HEK293 (cell line): ENCODE measurements at regions of chr10 and their contacts with region 1.

Region 1: GRCh38 chr10:52488606-52489485 is 174.8 kb downstream of the DKK1 start:
- H3K4me3 ChIP-seq: no peak overlapping the region
- H3K27ac ChIP-seq: no peak overlapping the region
- H3K4me1 ChIP-seq: no peaks in the 10 kb centered on the region
- CTCF ChIP-seq: no peak

Region 2: GRCh38 chr10:52308251-52309031 is 180.4 kb before region 1 on chr10:
- CTCF ChIA-PET with region 1: interaction called, 109 read pairs
- POLR2A ChIA-PET with region 1: no interaction called
- H3K4me3 ChIP-seq: peak overlapping the region; percentile 22; the same call in 1 of the 2 replicates
- H3K27ac ChIP-seq: no peak overlapping the region
- H3K4me1 ChIP-seq: no peaks in the 10 kb centered on the region
- CTCF ChIP-seq: peak; percentile 44

Region 3: DNA sequence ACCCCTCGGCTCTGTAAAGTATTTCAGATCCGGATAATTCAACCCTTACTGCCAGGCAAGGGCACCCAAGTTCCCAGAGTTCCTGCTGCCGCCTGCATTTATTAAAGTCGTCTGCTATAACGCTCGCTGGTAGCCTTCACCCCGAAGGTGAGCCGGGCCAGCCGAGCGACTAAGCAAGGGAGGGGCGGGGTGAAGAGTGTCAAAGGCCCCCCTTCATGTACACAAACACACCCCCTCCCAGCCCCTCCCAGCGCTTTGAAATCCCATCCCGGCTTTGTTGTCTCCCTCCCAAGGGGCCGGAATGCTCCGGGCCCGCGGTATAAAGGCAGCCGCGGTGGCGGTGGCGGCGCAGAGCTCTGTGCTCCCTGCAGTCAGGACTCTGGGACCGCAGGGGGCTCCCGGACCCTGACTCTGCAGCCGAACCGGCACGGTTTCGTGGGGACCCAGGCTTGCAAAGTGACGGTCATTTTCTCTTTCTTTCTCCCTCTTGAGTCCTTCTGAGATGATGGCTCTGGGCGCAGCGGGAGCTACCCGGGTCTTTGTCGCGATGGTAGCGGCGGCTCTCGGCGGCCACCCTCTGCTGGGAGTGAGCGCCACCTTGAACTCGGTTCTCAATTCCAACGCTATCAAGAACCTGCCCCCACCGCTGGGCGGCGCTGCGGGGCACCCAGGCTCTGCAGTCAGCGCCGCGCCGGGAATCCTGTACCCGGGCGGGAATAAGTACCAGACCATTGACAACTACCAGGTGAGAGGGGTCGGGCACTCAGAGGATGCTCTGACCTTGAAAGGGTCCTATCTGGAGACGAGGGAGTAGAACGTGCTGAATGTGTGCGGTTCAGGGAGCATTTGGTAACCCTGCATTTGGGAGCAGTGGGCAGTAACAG is 174.7 kb before region 1 on chr10 and contains the start of gene DKK1:
- CTCF ChIA-PET with region 1: interaction called, 109 read pairs
- POLR2A ChIA-PET with region 1: interaction called, 3 read pairs
- H3K4me3 ChIP-seq: peak within 1 kb of the TSS; percentile 67
- H3K27ac ChIP-seq: peak within 1 kb of the TSS; percentile 35; the same call in 1 of the 2 replicates
- H3K4me1 ChIP-seq: no peaks in the 10 kb centered on the region
- CTCF ChIP-seq: peak; percentile 99

Region 4: GRCh38 chr10:52523696-52524095 is 34.9 kb after region 1 on chr10:
- CTCF ChIA-PET with region 1: no interaction called
- POLR2A ChIA-PET with region 1: no interaction called
- H3K4me3 ChIP-seq: no peak overlapping the region
- H3K27ac ChIP-seq: no peak overlapping the region
- H3K4me1 ChIP-seq: no peaks in the 10 kb centered on the region
- CTCF ChIP-seq: no peak

Region 5: DNA sequence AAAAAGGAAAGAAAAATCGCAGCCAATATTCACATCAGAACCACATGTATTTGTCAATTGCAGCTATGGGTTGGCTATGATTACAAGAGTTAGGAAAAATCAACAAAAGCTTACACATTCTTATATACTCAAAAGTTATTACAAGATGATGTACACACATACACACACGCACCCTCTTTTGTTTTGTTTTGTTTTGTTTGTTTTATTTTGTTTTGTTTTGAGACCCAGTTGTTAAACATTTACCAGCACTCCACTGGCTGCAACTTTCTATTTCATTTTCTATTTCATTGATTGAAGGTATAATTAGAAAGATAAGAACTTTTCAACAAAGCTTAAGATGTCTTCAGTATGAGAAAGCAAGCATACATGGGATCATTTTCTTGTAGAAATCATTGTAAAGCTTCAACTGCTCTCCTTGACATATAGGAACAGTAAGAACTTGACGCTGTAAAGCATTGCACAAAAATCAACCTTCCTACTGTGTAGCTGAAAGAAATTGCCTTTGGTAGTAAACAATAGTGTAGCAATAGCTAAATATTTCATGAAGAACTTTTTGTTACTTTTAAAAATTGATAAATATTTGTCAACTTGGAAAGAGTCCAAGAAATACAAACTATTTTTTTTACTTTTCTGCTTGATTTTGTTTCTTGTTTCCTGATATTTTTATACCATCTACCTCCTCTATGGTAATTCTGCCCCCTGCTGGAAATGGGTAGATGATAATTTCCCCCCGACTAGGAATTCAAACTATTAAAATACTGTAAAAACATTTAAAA is 77.8 kb after region 1 on chr10:
- CTCF ChIA-PET with region 1: interaction called, 11 read pairs
- POLR2A ChIA-PET with region 1: no interaction called
- H3K4me3 ChIP-seq: no peak overlapping the region
- H3K27ac ChIP-seq: no peak overlapping the region
- H3K4me1 ChIP-seq: no peaks in the 10 kb centered on the region
- CTCF ChIP-seq: no peak